Panc1 (cell line): ENCODE measurements at regions of chr5 and their contacts with region 1.

Region 1: GRCh38 chr5:52909192-52909591 is 80.0 kb upstream of the ITGA2 start:
- DNase-seq: no peak
- ATAC-seq: no peak
- H3K4me3 ChIP-seq: no peak overlapping the region
- H3K27ac ChIP-seq: no peak overlapping the region
- H3K4me1 ChIP-seq: no peaks in the 10 kb centered on the region; the same call in 1 of the 2 replicates
- H3K27me3 ChIP-seq: peaks cover 9% of the 10 kb centered on the region
- CTCF ChIP-seq: no peak

Region 2: GRCh38 chr5:52693280-52693679 is 215.9 kb before region 1 on chr5:
- CTCF ChIA-PET with region 1: no interaction called
- POLR2A ChIA-PET with region 1: no interaction called
- in situ Hi-C with region 1: no loop called
- intact Hi-C with region 1: loop called (anchors 10 kb)
- DNase-seq: no peak
- ATAC-seq: no peak
- H3K4me3 ChIP-seq: no peak overlapping the region
- H3K27ac ChIP-seq: no peak overlapping the region
- H3K4me1 ChIP-seq: no peaks in the 10 kb centered on the region
- H3K27me3 ChIP-seq: peaks cover 4% of the 10 kb centered on the region
- CTCF ChIP-seq: peak; percentile 52

Region 3: DNA sequence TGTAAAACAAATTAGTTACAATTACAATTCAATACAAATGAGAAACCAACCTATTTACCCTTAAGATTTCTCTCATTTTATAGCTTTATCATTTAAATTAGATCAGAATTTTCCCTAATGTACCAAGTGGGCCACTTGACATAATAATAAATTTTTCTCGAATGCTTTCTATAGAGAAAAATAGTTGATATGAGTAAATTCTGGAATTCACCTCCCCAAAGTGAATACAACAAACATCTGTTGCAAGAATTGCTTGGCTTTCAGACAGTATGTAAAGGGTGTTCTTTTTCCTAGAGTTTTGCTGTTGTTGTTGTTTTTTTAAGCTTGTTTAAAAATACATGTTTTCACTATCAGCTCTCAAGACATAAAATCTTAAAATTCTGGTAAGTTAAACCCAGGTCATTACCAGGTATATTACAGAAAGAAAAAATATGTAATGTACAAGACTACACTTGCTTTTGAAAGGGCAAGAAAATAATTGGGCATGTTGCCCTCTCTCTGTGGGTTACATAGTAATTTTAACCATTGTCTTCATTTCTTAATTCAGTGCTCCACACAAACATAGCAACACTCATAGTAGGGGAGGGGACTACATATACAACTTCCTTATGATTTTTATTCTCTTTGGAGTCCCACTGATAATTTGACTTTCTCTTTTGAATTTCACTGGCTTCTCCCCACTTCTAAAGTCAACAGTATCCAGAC is 1200.6 kb after region 1 on chr5:
- CTCF ChIA-PET with region 1: no interaction called
- POLR2A ChIA-PET with region 1: no interaction called
- in situ Hi-C with region 1: no loop called
- intact Hi-C with region 1: no loop called
- DNase-seq: no peak
- ATAC-seq: no peak
- H3K4me3 ChIP-seq: no peak overlapping the region
- H3K27ac ChIP-seq: no peak overlapping the region
- H3K4me1 ChIP-seq: no peaks in the 10 kb centered on the region
- H3K27me3 ChIP-seq: no peaks in the 10 kb centered on the region
- CTCF ChIP-seq: no peak